ENCODE measurements at regions of chr12 and their contacts with region 1.

Region 1: DNA sequence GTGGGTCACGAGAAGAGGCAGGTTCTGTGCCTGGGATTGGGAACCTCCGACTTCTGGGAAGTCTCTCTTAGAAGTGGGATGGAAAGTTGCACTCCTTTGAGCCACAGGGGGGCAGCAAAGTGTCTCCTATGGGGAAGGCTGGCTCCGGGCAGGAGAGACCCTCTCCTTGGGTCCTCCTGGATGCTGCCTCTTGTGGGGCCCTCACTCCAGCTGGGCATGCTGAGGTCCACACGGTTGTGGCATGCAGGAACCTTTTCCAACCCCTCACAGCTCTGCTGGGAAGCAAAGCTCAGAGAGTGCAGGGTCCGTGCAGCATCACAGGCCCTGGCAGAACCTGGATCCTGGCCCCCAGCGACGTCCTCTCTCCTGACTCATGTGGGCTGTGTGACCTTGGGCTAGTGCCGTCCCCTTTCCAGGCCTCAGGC is 17.4 kb downstream of the SDSL start:
- ATAC-seq: peak; percentile 68 to 91 (median 78)
- H3K4me3 ChIP-seq: no peak overlapping the region
- H3K27ac ChIP-seq: no peak overlapping the region
- H3K4me1 ChIP-seq: no peaks in the 10 kb centered on the region

Region 2: DNA sequence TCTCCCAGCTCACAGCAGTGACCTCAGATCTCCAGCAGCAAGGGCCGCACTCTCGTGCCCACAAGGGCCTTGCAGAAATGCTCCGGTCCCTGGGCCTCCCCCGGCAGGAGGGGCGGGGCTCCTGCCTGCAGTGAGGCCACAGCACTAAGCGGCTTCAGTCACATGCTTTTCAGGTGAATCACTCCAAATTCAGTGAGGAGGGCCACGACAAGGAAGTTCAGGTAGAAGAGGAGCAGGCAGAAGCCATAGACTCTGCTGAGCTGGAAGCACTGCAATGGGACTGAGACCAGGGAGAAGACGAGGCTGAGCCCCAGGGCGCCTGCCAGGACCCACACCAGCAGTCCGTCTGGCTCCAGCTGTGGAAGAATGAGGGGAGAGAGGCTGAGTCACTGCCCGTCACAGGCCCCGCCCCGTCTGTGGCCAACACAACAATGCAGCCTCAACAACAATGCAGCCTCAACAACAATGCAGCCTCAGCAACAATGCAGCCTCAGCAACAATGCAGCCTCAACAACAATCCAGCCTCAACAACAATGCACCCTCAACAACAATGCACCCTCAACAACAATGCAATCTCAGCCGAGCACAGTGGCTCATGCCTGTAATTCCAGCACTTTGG is 139.9 kb before region 1 on chr12:
- in situ Hi-C with region 1: no loop called
- ATAC-seq: peak; percentile 54 to 84 (median 76)
- H3K4me3 ChIP-seq: no peak overlapping the region
- H3K27ac ChIP-seq: no peak overlapping the region
- H3K4me1 ChIP-seq: peaks cover 2 to 14% of the 10 kb centered on the region in 2 donors

Region 3: DNA sequence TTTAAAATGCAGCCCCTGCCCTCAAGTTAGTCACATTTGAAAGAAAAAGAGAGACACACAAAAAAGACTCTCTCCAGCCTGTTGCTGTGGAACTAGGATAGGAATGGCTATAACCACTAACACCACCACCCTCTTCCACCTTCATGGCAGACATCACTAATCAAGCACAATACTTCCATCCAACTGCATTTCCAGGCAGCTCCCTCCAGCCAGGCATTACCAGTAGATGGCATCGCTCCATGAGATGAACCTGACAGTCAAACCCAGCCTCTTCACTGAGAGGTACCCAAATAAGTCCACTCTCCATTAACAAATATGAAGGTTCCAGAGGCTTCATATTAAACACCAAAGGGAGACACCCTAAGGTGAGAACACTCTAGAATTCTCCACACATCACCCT is 129.1 kb before region 1 on chr12:
- in situ Hi-C with region 1: no loop called
- ATAC-seq: peak in 1 of 8 experiments; percentile 11
- H3K4me3 ChIP-seq: no peak overlapping the region
- H3K27ac ChIP-seq: no peak overlapping the region
- H3K4me1 ChIP-seq: peaks cover 3 to 8% of the 10 kb centered on the region in 2 donors

Region 4: DNA sequence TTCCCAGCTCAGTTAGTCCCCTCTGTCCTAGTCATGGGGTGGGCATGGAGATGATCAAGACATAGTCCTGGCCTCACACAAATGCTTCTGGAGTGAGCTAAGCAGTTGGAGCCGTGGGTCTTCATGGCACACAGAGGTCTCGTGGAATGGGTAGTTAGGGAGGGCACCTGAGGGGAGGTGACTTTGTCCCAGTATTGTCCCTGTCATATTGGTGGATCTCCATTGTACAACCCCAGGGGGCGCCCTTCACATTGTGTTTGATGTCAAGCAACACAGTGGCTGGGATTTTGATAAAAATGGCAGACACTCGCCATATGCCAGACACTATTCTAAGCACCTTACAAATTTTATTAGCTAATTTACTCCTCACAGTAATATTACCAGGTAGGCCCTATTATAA is 207.4 kb after region 1 on chr12:
- in situ Hi-C with region 1: no loop called
- ATAC-seq: no peak
- H3K4me3 ChIP-seq: no peak overlapping the region
- H3K27ac ChIP-seq: no peak overlapping the region
- H3K4me1 ChIP-seq: peaks cover 3 to 18% of the 10 kb centered on the region in 2 donors

Region 5: DNA sequence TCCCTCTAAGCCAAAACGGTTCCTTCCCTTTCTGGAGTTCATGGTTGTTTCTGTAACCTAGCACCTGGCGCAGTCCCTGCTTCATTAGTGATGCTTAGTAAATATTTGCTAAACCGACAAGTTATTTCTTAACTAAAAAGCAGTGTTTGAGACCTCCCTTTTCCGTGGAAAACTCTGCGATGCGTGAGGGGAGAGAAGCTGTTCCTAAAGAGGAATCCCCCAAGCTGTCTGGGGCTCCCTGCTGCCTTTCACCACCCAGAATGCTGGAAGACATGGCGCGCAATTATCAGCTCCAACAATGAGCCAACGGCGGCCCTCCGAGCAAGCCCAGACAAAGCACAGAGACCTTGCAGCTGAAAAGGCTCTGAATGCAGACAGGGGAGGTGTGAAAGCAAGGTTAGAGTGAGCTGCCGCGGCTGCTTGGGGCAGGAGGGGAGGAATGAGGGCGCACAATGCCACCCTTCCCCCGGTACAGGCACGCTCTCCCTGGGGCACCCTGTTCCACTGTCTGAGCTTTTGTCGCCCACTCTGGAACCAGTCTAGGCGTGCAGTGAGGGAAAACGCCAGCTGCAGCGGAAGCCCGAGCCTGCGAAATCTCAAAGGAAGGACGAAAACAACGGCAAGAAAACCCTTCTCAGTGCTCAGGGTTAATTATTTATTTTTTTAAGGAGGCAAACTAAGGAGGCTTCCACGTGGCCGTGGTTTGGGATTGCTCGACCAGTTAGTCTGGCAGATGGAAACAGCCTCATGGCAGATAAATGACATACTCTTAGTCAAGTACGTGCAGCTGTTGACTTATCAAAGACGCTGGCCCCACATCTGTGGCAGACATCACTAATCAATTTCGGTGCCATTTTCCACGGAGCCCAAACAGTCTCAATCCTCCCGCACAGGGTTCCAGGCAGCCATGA is 460.2 kb after region 1 on chr12:
- in situ Hi-C with region 1: loop called in 2 of 9 experiments (anchors 10 to 25 kb)
- ATAC-seq: peak in 5 of 8 experiments; percentile 78 to 88 (median 83)
- H3K4me3 ChIP-seq: no peak overlapping the region
- H3K27ac ChIP-seq: peak overlapping the region in 1 of 2 donors; percentile 43
- H3K4me1 ChIP-seq: peaks cover 10 to 15% of the 10 kb centered on the region in 2 donors